Activated CD4-positive, alpha-beta T cell treated with anti-CD3 and anti-CD28 coated beads for 36 hours (primary cell): ENCODE measurements at regions of chr16 and their contacts with region 1.

Region 1: DNA sequence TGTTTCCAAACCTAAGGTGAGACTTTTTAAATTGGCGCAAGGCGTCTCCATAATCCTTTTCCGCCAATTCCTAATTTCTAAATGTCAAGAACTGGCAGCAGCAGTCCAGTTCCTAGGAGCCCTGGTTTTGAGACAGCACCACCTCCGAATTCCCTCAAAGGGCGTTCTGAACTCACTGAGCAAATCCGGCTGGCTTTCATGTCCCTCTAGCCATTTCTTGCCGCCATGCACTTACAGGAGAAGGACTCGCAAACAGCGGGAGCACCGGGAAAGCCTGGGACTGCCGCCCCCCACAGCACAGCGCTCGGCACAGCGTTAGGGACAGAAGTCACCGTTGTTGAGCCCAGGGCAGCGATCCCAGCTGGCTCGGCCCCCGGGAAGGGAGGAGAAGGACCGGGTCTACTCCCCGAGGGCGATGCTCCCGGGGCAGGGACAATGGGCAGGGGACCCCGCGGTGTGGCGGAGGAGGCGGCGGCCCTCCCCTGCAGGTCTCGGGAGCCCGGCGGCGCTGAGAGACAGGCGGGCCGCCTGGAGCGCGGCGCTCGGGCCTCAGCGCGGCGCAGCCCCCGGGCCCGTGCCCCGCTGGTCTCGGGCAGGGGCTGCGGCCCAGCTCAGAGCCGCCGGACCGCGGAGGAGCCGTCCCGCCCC is 545 bp downstream of the ARHGAP17 start:
- DNase-seq: peak; percentile 38
- ATAC-seq: peak; percentile 8
- H3K4me3 Mint-ChIP-seq: peak overlapping the region; percentile 96
- H3K27ac Mint-ChIP-seq: peak overlapping the region; percentile 94
- H3K4me1 Mint-ChIP-seq: peaks cover 81% of the 10 kb centered on the region
- H3K27me3 Mint-ChIP-seq: no peaks in the 10 kb centered on the region

Region 2: GRCh38 chr16:24539291-24539849 is 475.3 kb before region 1 on chr16 and contains the start of gene RBBP6:
- CTCF ChIA-PET with region 1: no interaction called
- POLR2A ChIA-PET with region 1: no interaction called
- intact Hi-C with region 1: loop called in 1 of 2 experiments (anchors 5 kb)
- DNase-seq: peak; percentile 97
- ATAC-seq: peak; percentile 86
- H3K4me3 Mint-ChIP-seq: peak within 1 kb of the TSS; percentile 90
- H3K27ac Mint-ChIP-seq: peak within 1 kb of the TSS; percentile 100
- H3K4me1 Mint-ChIP-seq: peaks cover 20% of the 10 kb centered on the region
- H3K27me3 Mint-ChIP-seq: no peaks in the 10 kb centered on the region
- total RNA-seq, gene RBBP6: 70.7 to 71.1 TPM

Region 3: DNA sequence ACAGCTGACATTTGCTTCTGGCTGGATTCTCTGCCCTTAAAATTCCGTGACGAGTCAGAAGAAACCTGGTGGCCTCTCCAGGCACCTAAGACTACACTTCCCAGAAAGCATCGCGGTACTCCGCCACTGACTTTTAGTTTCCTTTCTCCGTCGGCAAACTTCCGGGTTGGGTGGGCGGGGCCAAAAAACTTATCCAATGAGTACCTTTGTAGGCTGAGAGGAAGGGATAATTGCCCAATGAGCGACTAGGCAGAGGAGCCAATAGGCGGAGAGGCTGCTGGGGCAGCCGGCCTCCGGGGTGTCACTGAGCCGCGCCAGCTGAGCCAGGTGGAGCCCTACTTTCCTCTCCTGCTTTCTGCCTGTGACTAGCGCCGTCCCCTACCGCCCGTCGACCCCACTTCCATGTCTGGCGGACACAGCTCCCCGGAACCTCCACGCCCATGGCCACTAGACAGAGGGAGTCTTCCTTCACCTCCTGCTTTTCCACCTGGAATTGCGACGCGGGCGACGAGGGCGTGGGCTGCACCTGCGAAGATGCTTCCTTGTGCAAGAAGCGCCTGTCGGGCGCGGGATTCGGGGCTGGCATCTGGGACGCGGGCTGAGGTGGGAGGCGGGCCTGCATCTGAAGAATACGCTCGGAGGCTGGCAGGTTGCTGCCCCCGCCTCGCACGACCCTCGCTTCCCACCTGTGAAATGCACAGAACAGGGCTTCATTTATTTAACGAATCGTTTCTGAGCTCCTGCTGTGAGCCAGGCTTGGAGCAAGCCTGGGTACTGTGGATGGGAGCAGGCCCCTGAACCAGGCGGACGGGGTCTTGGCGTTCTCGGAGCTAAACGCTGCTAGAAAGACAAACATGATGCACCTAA is 17.1 kb after region 1 on chr16:
- CTCF ChIA-PET with region 1: interaction called, 17 read pairs
- POLR2A ChIA-PET with region 1: interaction called, 3 read pairs
- intact Hi-C with region 1: loop called (anchors 1 kb)
- DNase-seq: peak; percentile 93
- ATAC-seq: peak; percentile 97
- H3K4me3 Mint-ChIP-seq: peak overlapping the region; percentile 75
- H3K27ac Mint-ChIP-seq: peak overlapping the region; percentile 100
- H3K4me1 Mint-ChIP-seq: peaks cover 46% of the 10 kb centered on the region
- H3K27me3 Mint-ChIP-seq: no peaks in the 10 kb centered on the region

Region 4: DNA sequence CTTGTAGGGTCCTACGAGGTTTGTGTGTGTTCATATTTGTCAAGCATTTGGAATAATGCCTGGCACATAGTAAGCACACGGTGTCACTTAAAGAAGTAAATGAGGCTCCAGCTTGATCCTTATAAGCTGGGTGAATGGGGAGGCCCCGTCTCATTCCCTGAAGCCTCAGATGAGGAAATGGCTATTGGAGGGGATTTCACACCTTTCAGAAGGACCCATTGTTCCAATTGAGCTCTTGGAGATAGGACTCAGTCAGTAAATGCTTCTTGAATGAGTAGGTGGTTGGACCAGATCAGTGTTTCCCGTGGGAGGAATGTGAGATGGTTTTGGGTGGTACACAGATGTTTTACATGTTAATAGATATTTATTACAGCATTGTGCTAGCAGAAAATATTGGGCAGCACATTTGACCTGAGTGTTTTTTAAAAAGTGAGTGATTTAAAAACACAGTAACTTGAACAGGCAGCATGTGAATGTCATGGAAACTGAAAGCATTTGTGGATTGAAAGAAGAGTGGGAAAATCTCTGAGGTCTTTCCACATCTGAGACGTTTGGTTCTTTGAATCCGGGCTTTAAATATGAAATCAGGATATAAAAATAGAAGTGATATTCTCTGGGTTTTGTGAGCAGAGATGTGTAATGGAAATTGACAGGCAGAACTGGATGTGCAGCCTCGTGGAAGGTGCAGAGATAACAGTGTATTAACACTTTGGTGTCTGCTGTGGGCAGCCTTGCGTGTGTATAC is 37.0 kb after region 1 on chr16:
- CTCF ChIA-PET with region 1: interaction called, 5 read pairs
- POLR2A ChIA-PET with region 1: no interaction called
- intact Hi-C with region 1: loop called in 1 of 2 experiments (anchors 1 kb)
- DNase-seq: peak; percentile 46
- ATAC-seq: peak; percentile 30
- H3K4me3 Mint-ChIP-seq: peak overlapping the region; percentile 59
- H3K27ac Mint-ChIP-seq: peak overlapping the region; percentile 87
- H3K4me1 Mint-ChIP-seq: peaks cover 60% of the 10 kb centered on the region
- H3K27me3 Mint-ChIP-seq: no peaks in the 10 kb centered on the region

Region 5: GRCh38 chr16:25135254-25135878 is 120.7 kb after region 1 on chr16:
- CTCF ChIA-PET with region 1: no interaction called
- POLR2A ChIA-PET with region 1: no interaction called
- intact Hi-C with region 1: no loop called
- DNase-seq: no peak
- ATAC-seq: no peak
- H3K4me3 Mint-ChIP-seq: no peak overlapping the region
- H3K27ac Mint-ChIP-seq: no peak overlapping the region
- H3K4me1 Mint-ChIP-seq: no peaks in the 10 kb centered on the region
- H3K27me3 Mint-ChIP-seq: no peaks in the 10 kb centered on the region

Region 6: GRCh38 chr16:25257504-25257955 is 242.9 kb after region 1 on chr16 and contains the start of gene ZKSCAN2:
- CTCF ChIA-PET with region 1: no interaction called
- POLR2A ChIA-PET with region 1: no interaction called
- intact Hi-C with region 1: loop called in 1 of 2 experiments (anchors 1 kb)
- DNase-seq: peak; percentile 92
- ATAC-seq: peak; percentile 82
- H3K4me3 Mint-ChIP-seq: peak within 1 kb of the TSS; percentile 93
- H3K27ac Mint-ChIP-seq: peak within 1 kb of the TSS; percentile 98
- H3K4me1 Mint-ChIP-seq: peaks cover 59% of the 10 kb centered on the region
- H3K27me3 Mint-ChIP-seq: no peaks in the 10 kb centered on the region
- total RNA-seq, gene ZKSCAN2: 5.5 to 5.6 TPM